GM12878 (cell line): ENCODE measurements at regions of chr14 and their contacts with region 1.

Region 1: GRCh38 chr14:96852823-96853422 is 55.7 kb downstream of the VRK1 start:
- DNase-seq: peak; percentile 4
- ATAC-seq: peak; percentile 84
- H3K4me3 ChIP-seq: no peak overlapping the region
- H3K27ac ChIP-seq: no peak overlapping the region
- H3K4me1 ChIP-seq: no peaks in the 10 kb centered on the region
- H3K27me3 ChIP-seq: no peaks in the 10 kb centered on the region
- CTCF ChIP-seq: peak; percentile 57 to 68 (median 61)
- EP300 ChIP-seq: no peak
- POLR2A ChIP-seq: no peak
- RAD21 ChIP-seq: peak; percentile 67

Region 2: GRCh38 chr14:96567289-96567899 is 285.5 kb before region 1 on chr14:
- CTCF ChIA-PET with region 1: interaction called, 14 read pairs
- POLR2A ChIA-PET with region 1: no interaction called
- RAD21 ChIA-PET with region 1: interaction called, 14 read pairs
- SMC1A ChIA-PET with region 1: interaction called, 7 read pairs
- in situ Hi-C with region 1: no loop called
- intact Hi-C with region 1: no loop called
- DNase-seq: no peak
- ATAC-seq: peak; percentile 90
- H3K4me3 ChIP-seq: no peak overlapping the region
- H3K27ac ChIP-seq: no peak overlapping the region
- H3K4me1 ChIP-seq: no peaks in the 10 kb centered on the region
- H3K27me3 ChIP-seq: no peaks in the 10 kb centered on the region
- CTCF ChIP-seq: peak; percentile 38 to 50 (median 48); a peak in 5 of 6 replicates
- EP300 ChIP-seq: no peak
- POLR2A ChIP-seq: no peak
- RAD21 ChIP-seq: peak; percentile 55

Region 3: DNA sequence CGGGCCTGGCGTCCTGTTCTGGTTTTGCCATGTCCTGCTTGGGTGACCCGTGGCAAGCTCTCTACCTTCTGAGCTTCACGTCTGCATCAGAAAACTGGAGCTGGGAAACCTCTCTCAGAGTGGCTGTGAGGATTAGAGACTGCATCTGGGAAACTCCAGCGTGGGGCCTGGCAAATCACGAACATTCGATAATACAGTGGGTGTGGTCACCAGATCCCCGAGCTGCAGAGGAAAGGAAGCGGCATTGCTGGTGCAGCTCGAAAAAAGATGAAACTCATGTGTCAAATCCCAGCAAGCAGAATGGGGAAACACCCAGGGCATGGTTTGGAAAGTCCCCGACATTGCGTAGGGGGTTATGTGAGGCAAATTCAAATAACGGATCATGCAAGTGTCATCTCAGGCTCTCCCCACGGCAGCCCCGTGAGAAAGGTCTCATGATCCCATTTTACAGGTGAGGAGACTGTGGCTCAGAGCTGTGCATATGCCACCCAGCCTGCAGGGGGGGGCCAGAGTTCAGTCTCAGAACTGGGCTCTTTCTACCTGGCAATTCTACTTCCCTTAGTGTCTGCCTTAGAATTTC is 153.9 kb before region 1 on chr14:
- CTCF ChIA-PET with region 1: interaction called, 3 read pairs
- POLR2A ChIA-PET with region 1: no interaction called
- RAD21 ChIA-PET with region 1: interaction called, 10 read pairs
- SMC1A ChIA-PET with region 1: interaction called, 7 read pairs
- in situ Hi-C with region 1: no loop called
- intact Hi-C with region 1: no loop called
- DNase-seq: peak; percentile 86
- ATAC-seq: peak; percentile 94
- H3K4me3 ChIP-seq: no peak overlapping the region
- H3K27ac ChIP-seq: peak overlapping the region; percentile 54
- H3K4me1 ChIP-seq: peaks cover 15% of the 10 kb centered on the region
- H3K27me3 ChIP-seq: no peaks in the 10 kb centered on the region
- CTCF ChIP-seq: peak; percentile 46 to 60 (median 51); a peak in 5 of 6 replicates
- EP300 ChIP-seq: peak in 1 of 2 experiments; percentile 54; a peak in 2 of 4 replicates
- POLR2A ChIP-seq: no peak
- RAD21 ChIP-seq: no peak

Region 4: GRCh38 chr14:96762650-96763049 is 90.3 kb before region 1 on chr14:
- CTCF ChIA-PET with region 1: interaction called, 7 read pairs
- POLR2A ChIA-PET with region 1: no interaction called
- RAD21 ChIA-PET with region 1: interaction called, 25 read pairs
- SMC1A ChIA-PET with region 1: interaction called, 12 read pairs
- in situ Hi-C with region 1: no loop called
- intact Hi-C with region 1: no loop called
- DNase-seq: peak; percentile 65
- ATAC-seq: peak; percentile 99
- H3K4me3 ChIP-seq: 0 out of 2 replicates have a peak overlapping the region, but pooled peaks have one; percentile 5
- H3K27ac ChIP-seq: no peak overlapping the region
- H3K4me1 ChIP-seq: no peaks in the 10 kb centered on the region
- H3K27me3 ChIP-seq: peaks cover 0 to 4% of the 10 kb centered on the region in 2 experiments; a peak in 1 of 4 replicates
- CTCF ChIP-seq: no peak
- EP300 ChIP-seq: no peak
- POLR2A ChIP-seq: no peak
- RAD21 ChIP-seq: no peak

Region 5: DNA sequence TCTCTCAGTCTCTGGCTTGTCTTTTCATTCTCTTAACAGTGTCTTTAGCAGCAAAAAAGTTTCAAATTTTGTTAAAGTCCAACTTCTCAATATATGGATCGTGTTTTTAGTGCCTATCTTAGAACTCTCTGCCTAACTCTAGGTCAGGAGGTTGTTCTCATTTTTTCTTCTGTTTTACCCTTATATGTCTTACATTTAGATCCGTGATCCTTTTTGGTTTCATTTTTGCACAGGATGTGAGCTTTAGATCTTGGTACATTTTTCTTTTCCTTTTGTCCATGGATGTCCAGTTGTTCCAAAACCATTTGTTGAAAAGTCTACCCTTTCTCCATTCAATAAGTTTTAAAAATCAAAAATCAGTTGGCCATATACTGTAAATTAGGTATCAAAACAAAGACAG is 49.0 kb before region 1 on chr14:
- CTCF ChIA-PET with region 1: interaction called, 36 read pairs
- POLR2A ChIA-PET with region 1: interaction called, 3 read pairs
- RAD21 ChIA-PET with region 1: interaction called, 16 read pairs
- SMC1A ChIA-PET with region 1: interaction called, 44 read pairs
- in situ Hi-C with region 1: no loop called
- intact Hi-C with region 1: loop called (anchors 5 kb)
- DNase-seq: no peak
- ATAC-seq: no peak
- H3K4me3 ChIP-seq: no peak overlapping the region
- H3K27ac ChIP-seq: no peak overlapping the region
- H3K4me1 ChIP-seq: peaks cover 6% of the 10 kb centered on the region; the same call in 1 of the 2 replicates
- H3K27me3 ChIP-seq: no peaks in the 10 kb centered on the region
- CTCF ChIP-seq: no peak
- EP300 ChIP-seq: no peak
- POLR2A ChIP-seq: no peak
- RAD21 ChIP-seq: no peak

Region 6: DNA sequence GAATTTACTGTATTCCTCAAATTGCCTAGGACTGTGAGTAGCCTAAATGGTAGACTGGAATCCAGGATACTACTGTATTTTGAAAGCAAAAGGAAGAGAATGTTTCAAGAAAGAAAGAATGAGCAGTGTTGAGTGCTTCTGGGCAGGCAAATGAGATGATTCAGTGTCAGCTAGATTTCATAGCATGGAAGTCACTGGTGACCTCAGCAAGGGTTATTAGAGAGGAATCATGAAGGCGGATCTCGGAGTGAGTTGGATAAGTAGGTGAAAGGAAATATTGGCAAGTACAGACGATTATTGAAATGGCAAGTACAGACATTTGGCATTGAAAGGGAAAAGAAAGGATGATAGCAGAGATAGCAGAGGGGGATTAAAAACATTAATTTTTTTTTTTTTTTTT is 28.6 kb before region 1 on chr14:
- CTCF ChIA-PET with region 1: interaction called, 12 read pairs
- POLR2A ChIA-PET with region 1: no interaction called
- RAD21 ChIA-PET with region 1: interaction called, 7 read pairs
- SMC1A ChIA-PET with region 1: interaction called, 4 read pairs
- in situ Hi-C with region 1: no loop called
- intact Hi-C with region 1: no loop called
- DNase-seq: no peak
- ATAC-seq: no peak
- H3K4me3 ChIP-seq: no peak overlapping the region
- H3K27ac ChIP-seq: no peak overlapping the region
- H3K4me1 ChIP-seq: no peaks in the 10 kb centered on the region
- H3K27me3 ChIP-seq: no peaks in the 10 kb centered on the region
- CTCF ChIP-seq: no peak
- EP300 ChIP-seq: no peak
- POLR2A ChIP-seq: no peak
- RAD21 ChIP-seq: no peak

Region 7: DNA sequence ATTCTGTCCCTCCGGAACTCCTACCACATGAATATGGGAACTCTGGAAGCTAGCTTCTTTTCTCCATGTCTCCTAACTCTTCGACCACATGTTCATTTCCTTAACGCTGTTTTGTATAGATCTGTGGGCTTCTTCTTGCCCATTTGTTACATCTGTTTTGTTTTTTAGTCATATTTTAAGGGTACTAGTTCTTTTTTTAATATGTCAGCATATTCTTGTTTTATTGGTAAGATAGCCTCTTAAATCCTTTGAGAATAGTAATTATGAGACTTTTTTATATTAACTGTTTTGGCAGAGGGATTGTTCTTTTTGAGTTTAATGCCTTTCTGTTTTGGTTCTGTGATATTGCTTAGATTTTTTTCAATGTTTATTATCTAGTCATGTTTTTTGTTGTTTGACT is 14.7 kb after region 1 on chr14:
- CTCF ChIA-PET with region 1: interaction called, 28 read pairs
- POLR2A ChIA-PET with region 1: no interaction called
- RAD21 ChIA-PET with region 1: interaction called, 7 read pairs
- SMC1A ChIA-PET with region 1: interaction called, 18 read pairs
- in situ Hi-C with region 1: no loop called
- intact Hi-C with region 1: no loop called
- DNase-seq: no peak
- ATAC-seq: no peak
- H3K4me3 ChIP-seq: no peak overlapping the region
- H3K27ac ChIP-seq: no peak overlapping the region
- H3K4me1 ChIP-seq: no peaks in the 10 kb centered on the region
- H3K27me3 ChIP-seq: no peaks in the 10 kb centered on the region
- CTCF ChIP-seq: no peak
- EP300 ChIP-seq: no peak
- POLR2A ChIP-seq: no peak
- RAD21 ChIP-seq: no peak

Region 8: DNA sequence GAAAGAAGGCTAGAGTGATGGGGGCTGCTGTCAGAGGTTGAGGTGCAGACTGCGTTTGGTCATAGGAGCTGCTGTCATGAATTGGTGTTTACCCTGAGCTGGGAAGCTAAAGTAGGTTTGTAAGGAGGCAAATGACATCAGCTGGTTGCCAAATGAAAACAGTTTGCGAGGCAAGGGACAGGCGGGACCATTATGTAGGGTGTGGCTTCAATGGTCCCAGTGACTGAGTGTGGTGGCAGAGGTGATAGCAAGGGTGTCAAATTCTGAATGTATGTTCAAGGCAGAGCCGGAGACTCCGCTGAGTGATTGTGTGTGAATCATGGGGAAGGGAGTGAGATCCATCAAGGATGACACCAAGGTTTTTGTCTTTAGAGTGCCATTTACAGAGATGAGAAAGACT is 303.8 kb after region 1 on chr14:
- CTCF ChIA-PET with region 1: no interaction called
- POLR2A ChIA-PET with region 1: no interaction called
- RAD21 ChIA-PET with region 1: no interaction called
- SMC1A ChIA-PET with region 1: no interaction called
- in situ Hi-C with region 1: no loop called
- intact Hi-C with region 1: no loop called
- DNase-seq: no peak
- ATAC-seq: no peak
- H3K4me3 ChIP-seq: no peak overlapping the region
- H3K27ac ChIP-seq: no peak overlapping the region
- H3K4me1 ChIP-seq: no peaks in the 10 kb centered on the region
- H3K27me3 ChIP-seq: no peaks in the 10 kb centered on the region
- CTCF ChIP-seq: no peak
- EP300 ChIP-seq: no peak
- POLR2A ChIP-seq: no peak
- RAD21 ChIP-seq: no peak